A549 (cell line): ENCODE measurements at regions of chr16 and their contacts with region 1.

Region 1: GRCh38 chr16:3665508-3665907 is 11.0 kb downstream of the DNASE1 start:
- DNase-seq: no peak
- ATAC-seq: peak in 1 of 2 experiments; percentile 44; a peak in 3 of 6 replicates
- H3K4me3 ChIP-seq: no peak overlapping the region
- H3K27ac ChIP-seq: no peak overlapping the region
- H3K4me1 ChIP-seq: no peaks in the 10 kb centered on the region
- CTCF ChIP-seq: no peak
- EP300 ChIP-seq: no peak
- POLR2A ChIP-seq: no peak
- RAD21 ChIP-seq: no peak

Region 2: DNA sequence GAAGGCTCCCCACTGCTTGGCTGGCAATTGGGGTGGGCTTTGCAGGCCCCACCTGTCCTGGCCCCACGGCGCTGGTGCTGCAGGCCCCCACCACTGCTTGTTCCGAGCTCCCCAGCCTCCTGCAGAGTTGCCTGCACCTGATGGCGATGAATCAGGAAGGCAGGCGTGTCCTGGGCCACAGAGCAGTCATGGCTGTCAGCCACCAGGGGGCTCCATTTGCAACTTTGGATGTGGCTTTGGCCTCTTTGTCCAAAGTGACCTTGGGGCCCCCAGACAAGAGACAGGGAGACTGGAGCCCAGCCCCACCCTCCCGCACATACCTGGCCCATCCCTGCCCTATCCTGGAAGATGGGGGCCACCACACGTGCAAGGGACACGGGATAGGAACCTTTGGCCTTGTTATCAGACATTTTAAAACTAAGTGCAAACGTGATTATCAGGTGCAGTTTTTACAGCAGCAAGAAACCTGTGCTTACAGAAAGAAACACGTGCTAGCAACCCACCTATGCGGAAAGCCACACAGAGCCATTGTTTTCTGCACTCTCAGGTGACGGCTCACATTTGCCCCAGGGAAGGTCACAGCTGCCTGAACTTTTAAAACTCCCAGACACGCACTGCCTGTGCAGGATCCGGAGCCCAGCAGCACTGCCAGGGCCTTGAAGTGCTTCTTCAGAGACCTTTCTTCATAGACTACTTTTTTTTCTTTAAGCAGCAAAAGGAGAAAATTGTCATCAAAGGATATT is 11.1 kb before region 1 on chr16 and contains the start of gene DNASE1:
- CTCF ChIA-PET with region 1: interaction called, 11 read pairs
- POLR2A ChIA-PET with region 1: no interaction called
- DNase-seq: peak; percentile 74 to 80
- ATAC-seq: peak; percentile 81 to 89
- H3K4me3 ChIP-seq: no peak within 1 kb of the TSS
- H3K27ac ChIP-seq: no peak within 1 kb of the TSS
- H3K4me1 ChIP-seq: peaks cover 6% of the 10 kb centered on the region; the same call in 1 of the 3 replicates
- CTCF ChIP-seq: peak; percentile 60
- EP300 ChIP-seq: no peak
- POLR2A ChIP-seq: no peak
- RAD21 ChIP-seq: peak; percentile 39 to 56; a peak in 4 of 5 replicates
- polyA plus RNA-seq, gene DNASE1: 6.3 and 10.0 TPM in 2 replicates